ENCODE measurements at regions of chr1 and their contacts with region 1.

Region 1: GRCh38 chr1:93814059-93814794 is 64.8 kb downstream of the DNTTIP2 start:
- DNase-seq: peak; percentile 89
- H3K4me3 ChIP-seq: no peak overlapping the region
- H3K27ac ChIP-seq: no peak overlapping the region
- H3K4me1 ChIP-seq: peaks cover 39% of the 10 kb centered on the region
- H3K27me3 ChIP-seq: no peaks in the 10 kb centered on the region
- CTCF ChIP-seq: peak; percentile 89 to 97
- POLR2A ChIP-seq: no peak

Region 2: DNA sequence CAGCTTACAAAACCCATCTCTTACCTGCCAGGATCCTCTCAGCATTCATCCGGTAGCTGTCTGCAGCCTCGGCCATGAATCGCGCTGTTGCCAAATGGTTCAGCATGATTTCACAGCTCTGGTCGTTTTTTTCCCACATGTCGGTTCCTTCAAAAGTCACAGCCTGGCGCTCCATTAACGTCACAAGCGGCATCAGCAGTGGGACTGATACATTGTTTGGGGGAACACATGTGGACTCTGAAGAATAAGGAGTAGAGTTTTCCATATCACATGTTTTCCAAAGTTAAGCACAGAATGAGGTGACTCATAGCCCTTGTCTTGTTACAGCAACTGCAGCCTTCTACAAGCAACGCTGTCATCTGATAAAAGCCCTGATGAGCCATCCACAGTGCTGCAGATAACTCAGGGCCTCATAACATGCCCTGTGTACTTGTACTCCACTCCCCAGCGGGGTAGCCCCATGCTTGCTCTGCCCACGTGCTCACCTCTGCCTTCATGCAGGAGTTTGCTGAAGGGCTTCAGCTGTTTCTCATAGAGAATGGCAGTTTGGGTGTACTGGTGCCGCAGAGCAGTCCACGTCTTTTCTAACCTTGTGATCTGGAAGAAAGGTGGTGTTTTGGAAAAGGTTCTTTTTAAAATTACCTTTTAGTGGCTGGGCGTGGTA is 246.8 kb before region 1 on chr1:
- CTCF ChIA-PET with region 1: interaction called, 7 read pairs
- POLR2A ChIA-PET with region 1: no interaction called
- dilution Hi-C with region 1: no loop called
- intact Hi-C with region 1: loop called (anchors 5 kb)
- DNase-seq: peak; percentile 81
- H3K4me3 ChIP-seq: no peak overlapping the region
- H3K27ac ChIP-seq: peak overlapping the region; percentile 34
- H3K4me1 ChIP-seq: peaks cover 24% of the 10 kb centered on the region
- H3K27me3 ChIP-seq: no peaks in the 10 kb centered on the region
- CTCF ChIP-seq: no peak
- POLR2A ChIP-seq: no peak

Region 3: GRCh38 chr1:93635614-93636543 is 178.3 kb before region 1 on chr1:
- CTCF ChIA-PET with region 1: interaction called, 490 read pairs
- POLR2A ChIA-PET with region 1: no interaction called
- dilution Hi-C with region 1: no loop called
- intact Hi-C with region 1: no loop called
- DNase-seq: peak; percentile 73
- H3K4me3 ChIP-seq: no peak overlapping the region
- H3K27ac ChIP-seq: peak overlapping the region; percentile 60
- H3K4me1 ChIP-seq: peaks cover 13% of the 10 kb centered on the region
- H3K27me3 ChIP-seq: no peaks in the 10 kb centered on the region
- CTCF ChIP-seq: peak in 1 of 2 donors; percentile 6
- POLR2A ChIP-seq: no peak

Region 4: GRCh38 chr1:93686497-93687250 is 127.6 kb before region 1 on chr1:
- CTCF ChIA-PET with region 1: interaction called, 122 read pairs
- POLR2A ChIA-PET with region 1: no interaction called
- dilution Hi-C with region 1: no loop called
- intact Hi-C with region 1: no loop called
- DNase-seq: no peak
- H3K4me3 ChIP-seq: no peak overlapping the region
- H3K27ac ChIP-seq: no peak overlapping the region
- H3K4me1 ChIP-seq: peaks cover 7% of the 10 kb centered on the region
- H3K27me3 ChIP-seq: no peaks in the 10 kb centered on the region
- CTCF ChIP-seq: no peak
- POLR2A ChIP-seq: no peak

Region 5: GRCh38 chr1:93749894-93750301 is 64.3 kb before region 1 on chr1:
- CTCF ChIA-PET with region 1: interaction called, 12 read pairs
- POLR2A ChIA-PET with region 1: no interaction called
- dilution Hi-C with region 1: no loop called
- intact Hi-C with region 1: no loop called
- DNase-seq: peak; percentile 15
- H3K4me3 ChIP-seq: no peak overlapping the region
- H3K27ac ChIP-seq: no peak overlapping the region
- H3K4me1 ChIP-seq: peaks cover 15% of the 10 kb centered on the region
- H3K27me3 ChIP-seq: no peaks in the 10 kb centered on the region
- CTCF ChIP-seq: peak in 1 of 2 donors; percentile 3
- POLR2A ChIP-seq: no peak

Region 6: GRCh38 chr1:93846211-93846991 is 32.2 kb after region 1 on chr1:
- CTCF ChIA-PET with region 1: interaction called, 317 read pairs
- POLR2A ChIA-PET with region 1: interaction called, 10 read pairs
- dilution Hi-C with region 1: no loop called
- intact Hi-C with region 1: loop called (anchors 1 kb)
- DNase-seq: peak; percentile 83
- H3K4me3 ChIP-seq: peak overlapping the region; percentile 65 to 90 (median 67)
- H3K27ac ChIP-seq: peak overlapping the region; percentile 99
- H3K4me1 ChIP-seq: peaks cover 25% of the 10 kb centered on the region
- H3K27me3 ChIP-seq: no peaks in the 10 kb centered on the region
- CTCF ChIP-seq: peak; percentile 27 to 53
- POLR2A ChIP-seq: peak; percentile 72

Region 7: DNA sequence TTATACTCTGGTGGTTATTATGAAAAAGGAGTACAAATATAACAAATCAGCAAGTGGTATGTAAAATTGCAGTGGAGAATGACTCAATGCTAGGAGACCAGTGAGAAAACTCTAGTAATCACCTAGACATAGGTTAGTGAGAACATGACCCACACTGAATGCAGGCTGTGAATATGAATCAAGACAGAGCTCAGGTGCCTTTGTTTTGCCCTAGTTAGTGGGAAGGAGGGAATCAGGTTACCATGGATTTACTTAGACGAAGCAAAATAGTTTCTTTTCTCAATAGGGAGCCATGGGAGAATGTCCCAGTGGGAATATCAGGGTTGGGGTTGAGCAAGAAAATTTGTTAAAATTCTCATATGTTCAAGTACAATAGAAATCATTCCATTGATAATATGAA is 105.6 kb after region 1 on chr1:
- CTCF ChIA-PET with region 1: no interaction called
- POLR2A ChIA-PET with region 1: no interaction called
- dilution Hi-C with region 1: no loop called
- intact Hi-C with region 1: no loop called
- DNase-seq: no peak
- H3K4me3 ChIP-seq: no peak overlapping the region
- H3K27ac ChIP-seq: no peak overlapping the region
- H3K4me1 ChIP-seq: no peaks in the 10 kb centered on the region
- H3K27me3 ChIP-seq: peaks cover 0 to 2% of the 10 kb centered on the region in 2 experiments
- CTCF ChIP-seq: no peak
- POLR2A ChIP-seq: no peak

Measured in endothelial cell of umbilical vein (primary cell).